Caco-2 (cell line): ENCODE measurements at regions of chr7 and their contacts with region 1.

Region 1: GRCh38 chr7:90346336-90347125 is at the start of gene GTPBP10:
- DNase-seq: peak; percentile 93 to 94
- H3K4me3 ChIP-seq: peak within 1 kb of the TSS; percentile 86
- H3K4me3 Mint-ChIP-seq: peak within 1 kb of the TSS; percentile 86
- H3K27ac Mint-ChIP-seq: peak within 1 kb of the TSS; percentile 94
- H3K4me1 ChIP-seq: peaks cover 15% of the 10 kb centered on the region
- H3K4me1 Mint-ChIP-seq: peaks cover 32% of the 10 kb centered on the region
- H3K27me3 ChIP-seq: no peaks in the 10 kb centered on the region
- H3K27me3 Mint-ChIP-seq: no peaks in the 10 kb centered on the region
- CTCF ChIP-seq: peak; percentile 67 to 82
- total RNA-seq, gene GTPBP10: 42.7 and 45.2 TPM in 2 replicates

Region 2: GRCh38 chr7:90312745-90313144 is 33.8 kb before region 1 on chr7:
- CTCF ChIA-PET with region 1: no interaction called
- POLR2A ChIA-PET with region 1: no interaction called
- intact Hi-C with region 1: no loop called
- DNase-seq: no peak
- H3K4me3 ChIP-seq: no peak overlapping the region
- H3K4me3 Mint-ChIP-seq: no peak overlapping the region
- H3K27ac Mint-ChIP-seq: no peak overlapping the region
- H3K4me1 ChIP-seq: no peaks in the 10 kb centered on the region
- H3K4me1 Mint-ChIP-seq: no peaks in the 10 kb centered on the region
- H3K27me3 ChIP-seq: no peaks in the 10 kb centered on the region
- H3K27me3 Mint-ChIP-seq: no peaks in the 10 kb centered on the region
- CTCF ChIP-seq: no peak

Region 3: DNA sequence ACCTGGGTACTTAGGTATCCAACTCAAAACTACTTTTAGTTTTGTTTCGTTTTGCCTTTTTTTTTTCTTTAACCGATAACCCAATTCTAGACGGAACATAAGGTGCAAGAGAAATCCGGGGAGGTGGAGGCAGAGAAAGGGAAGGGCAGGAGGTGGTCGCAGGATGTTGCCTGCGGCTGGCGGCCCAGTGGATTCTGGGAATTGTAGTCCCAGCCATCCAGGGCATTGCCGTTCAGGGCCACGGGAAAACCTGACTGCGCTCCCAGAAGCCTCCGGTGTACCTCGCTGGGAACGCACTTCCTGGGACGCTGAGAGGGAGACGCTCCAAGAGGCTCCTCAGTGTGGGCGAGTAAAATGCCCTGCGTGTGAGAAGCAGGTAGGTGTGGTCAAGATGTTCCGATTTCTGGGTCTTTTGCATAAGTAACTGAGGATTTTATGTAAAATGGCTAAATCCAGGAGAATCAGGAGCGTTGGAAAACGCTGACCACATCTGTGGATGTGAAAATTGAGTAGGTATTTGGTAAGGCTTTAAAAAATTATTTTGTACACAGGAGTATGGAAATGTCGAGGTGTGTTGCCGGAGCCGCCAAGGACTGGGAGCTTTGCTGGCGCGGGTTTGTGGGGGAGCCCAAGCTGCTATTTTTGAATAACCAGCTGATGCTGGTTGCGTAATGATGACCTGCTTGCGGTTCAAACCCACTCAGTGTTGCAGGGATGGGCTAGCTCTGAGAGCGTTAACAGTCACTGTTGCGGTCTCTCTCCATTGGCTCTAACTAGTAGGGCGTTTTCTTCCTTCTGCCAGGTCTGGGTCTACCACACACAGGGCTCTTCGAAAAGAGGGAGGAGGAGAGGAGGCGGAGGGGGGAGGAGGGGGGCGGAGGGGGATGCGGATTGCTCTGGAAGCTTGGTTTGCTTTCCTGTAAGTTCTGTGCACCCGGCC is 56.9 kb after region 1 on chr7 and contains the start of gene CLDN12:
- CTCF ChIA-PET with region 1: interaction called, 7 read pairs
- POLR2A ChIA-PET with region 1: no interaction called
- intact Hi-C with region 1: loop called (anchors 1 kb)
- DNase-seq: peak; percentile 89 to 91
- H3K4me3 ChIP-seq: peak within 1 kb of the TSS; percentile 68
- H3K4me3 Mint-ChIP-seq: peak within 1 kb of the TSS; percentile 87
- H3K27ac Mint-ChIP-seq: peak within 1 kb of the TSS; percentile 89
- H3K4me1 ChIP-seq: no peaks in the 10 kb centered on the region; the same call in 1 of the 2 replicates
- H3K4me1 Mint-ChIP-seq: no peaks in the 10 kb centered on the region
- H3K27me3 ChIP-seq: no peaks in the 10 kb centered on the region
- H3K27me3 Mint-ChIP-seq: peaks cover 3% of the 10 kb centered on the region
- CTCF ChIP-seq: no peak
- total RNA-seq, gene CLDN12: 38.4 and 39.5 TPM in 2 replicates

Region 4: GRCh38 chr7:90536449-90536848 is 189.9 kb after region 1 on chr7:
- CTCF ChIA-PET with region 1: no interaction called
- POLR2A ChIA-PET with region 1: no interaction called
- intact Hi-C with region 1: no loop called
- DNase-seq: no peak
- H3K4me3 ChIP-seq: no peak overlapping the region
- H3K4me3 Mint-ChIP-seq: no peak overlapping the region
- H3K27ac Mint-ChIP-seq: no peak overlapping the region
- H3K4me1 ChIP-seq: no peaks in the 10 kb centered on the region
- H3K4me1 Mint-ChIP-seq: no peaks in the 10 kb centered on the region
- H3K27me3 ChIP-seq: no peaks in the 10 kb centered on the region
- H3K27me3 Mint-ChIP-seq: peaks cover 10% of the 10 kb centered on the region
- CTCF ChIP-seq: no peak